Posterior vena cava (tissue), 2 donors: ENCODE measurements at regions of chr2 and their contacts with region 1.

Region 1: GRCh38 chr2:224576088-224576715 is 9.0 kb downstream of the CUL3 start:
- DNase-seq: no peak

Region 2: DNA sequence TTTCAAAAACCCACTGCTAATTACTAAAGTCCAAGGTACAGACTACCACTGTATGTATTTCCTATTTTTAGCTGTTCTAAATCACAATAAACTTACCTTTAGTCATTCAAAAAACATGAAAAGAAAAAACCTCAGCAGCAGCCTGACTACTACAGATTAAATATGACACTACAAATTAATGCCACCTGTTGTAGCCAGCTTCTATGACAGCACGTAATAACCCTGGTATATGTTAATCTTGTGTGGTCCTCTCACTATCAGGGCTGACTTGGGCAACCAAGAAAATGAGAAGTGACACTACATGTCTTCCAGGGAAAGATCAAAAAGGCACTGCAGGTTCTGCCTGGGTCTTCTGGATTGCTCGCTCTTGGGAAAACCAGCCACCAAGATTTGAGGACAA is 83.7 kb before region 1 on chr2:
- intact Hi-C with region 1: loop called in 1 of 2 experiments (anchors 10 kb)
- DNase-seq: no peak

Region 3: DNA sequence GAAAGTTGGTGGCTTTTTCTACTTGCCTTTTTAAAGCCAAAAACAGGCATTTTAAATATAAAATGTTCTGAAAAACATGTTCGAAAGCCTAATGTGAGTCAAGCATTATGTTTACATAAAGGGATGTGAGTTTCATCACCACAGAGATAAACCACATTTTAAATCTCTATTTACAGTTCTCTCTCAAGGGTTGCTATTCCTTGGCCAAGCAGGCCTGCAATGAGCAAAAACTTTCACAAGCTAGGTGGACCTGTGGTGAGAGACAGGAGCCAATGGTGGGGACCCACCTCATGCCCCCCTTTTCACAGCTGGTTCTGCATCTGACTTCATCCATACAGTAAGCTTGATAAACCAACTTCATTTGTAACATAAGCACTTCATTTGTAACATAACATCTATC is 56.1 kb before region 1 on chr2:
- intact Hi-C with region 1: loop called in 1 of 2 experiments (anchors 10 kb)
- DNase-seq: no peak

Region 4: GRCh38 chr2:224885836-224886547 is 309.8 kb after region 1 on chr2:
- intact Hi-C with region 1: no loop called
- DNase-seq: no peak